ENCODE measurements at regions of chr9 and their contacts with region 1.

Region 1: DNA sequence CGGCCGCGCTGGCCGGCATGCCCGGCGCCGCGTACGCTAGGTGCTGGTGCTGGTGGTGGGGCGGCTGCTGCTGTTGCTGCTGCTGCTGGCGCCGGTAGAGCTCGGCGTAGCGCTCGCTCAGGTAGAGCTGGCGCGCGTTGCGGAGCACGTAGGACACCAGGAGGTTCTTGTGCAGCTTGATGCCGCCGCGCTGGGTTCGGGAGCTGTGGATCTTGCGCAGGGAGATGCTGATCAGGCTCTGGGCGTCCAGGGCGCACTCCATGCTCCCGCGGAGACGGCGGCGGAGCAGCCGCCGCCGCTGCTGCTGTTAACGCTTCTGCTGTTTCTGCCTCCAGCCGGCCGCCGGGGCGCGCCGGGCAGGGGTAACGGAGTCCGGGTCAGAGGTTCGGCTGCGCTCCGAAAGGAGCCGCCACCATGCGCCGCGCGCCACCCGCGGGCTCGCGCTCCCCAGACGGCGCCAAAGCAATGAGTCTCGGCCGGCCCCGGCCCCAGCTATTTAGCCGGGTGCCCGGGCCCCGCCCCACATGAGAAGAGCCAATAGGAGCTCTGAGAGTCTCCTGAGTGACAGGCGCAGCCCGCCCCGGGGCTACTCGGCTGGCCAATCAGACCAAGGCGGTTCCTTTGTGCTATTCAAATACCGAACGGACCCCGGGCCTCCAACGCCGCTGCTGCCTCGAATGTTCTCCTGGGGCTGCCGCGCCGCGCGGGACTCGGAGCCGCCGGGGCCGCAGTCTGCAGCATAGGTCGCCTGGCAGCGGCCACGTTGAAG is at the start of gene IER5L:
- DNase-seq: peak; percentile 97
- H3K4me3 ChIP-seq: peak within 1 kb of the TSS; percentile 81
- H3K4me3 Mint-ChIP-seq: peak within 1 kb of the TSS; percentile 89
- H3K27ac Mint-ChIP-seq: peak within 1 kb of the TSS; percentile 30
- H3K4me1 ChIP-seq: peaks cover 49% of the 10 kb centered on the region
- H3K4me1 Mint-ChIP-seq: peaks cover 27% of the 10 kb centered on the region
- H3K27me3 ChIP-seq: no peaks in the 10 kb centered on the region
- H3K27me3 Mint-ChIP-seq: no peaks in the 10 kb centered on the region
- CTCF ChIP-seq: no peak
- total RNA-seq, gene IER5L: 3.9 and 4.1 TPM in 2 replicates

Region 2: DNA sequence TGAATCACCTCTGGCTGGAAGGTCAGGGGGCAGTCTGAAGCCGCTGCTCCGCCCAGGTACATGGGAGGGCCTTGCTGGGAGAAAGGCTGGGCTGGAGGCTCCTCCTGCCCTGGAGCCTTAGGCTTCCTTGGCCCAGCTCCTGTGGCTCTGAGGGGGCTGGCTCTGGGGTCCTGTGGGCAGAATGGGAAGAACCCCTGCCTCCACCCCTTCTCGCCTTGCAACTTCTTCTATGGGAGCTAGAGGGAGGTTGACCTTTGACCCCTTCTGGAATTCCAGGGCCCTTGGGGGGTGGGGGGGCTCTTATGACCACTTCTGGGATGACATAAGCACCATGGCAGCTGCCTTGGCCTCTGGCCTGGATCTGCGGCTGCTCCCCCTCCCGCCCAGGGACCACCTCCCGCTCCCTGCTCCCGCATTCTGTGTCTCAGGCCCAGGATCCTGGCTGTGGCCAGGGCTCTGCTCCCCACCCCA is 32.1 kb before region 1 on chr9:
- CTCF ChIA-PET with region 1: interaction called, 23 read pairs
- POLR2A ChIA-PET with region 1: interaction called, 11 read pairs
- intact Hi-C with region 1: no loop called
- DNase-seq: peak; percentile 55 to 76
- H3K4me3 ChIP-seq: no peak overlapping the region
- H3K4me3 Mint-ChIP-seq: peak overlapping the region; percentile 29
- H3K27ac Mint-ChIP-seq: peak overlapping the region; percentile 93
- H3K4me1 ChIP-seq: peaks cover 55% of the 10 kb centered on the region
- H3K4me1 Mint-ChIP-seq: peaks cover 29% of the 10 kb centered on the region
- H3K27me3 ChIP-seq: no peaks in the 10 kb centered on the region
- H3K27me3 Mint-ChIP-seq: no peaks in the 10 kb centered on the region
- CTCF ChIP-seq: no peak

Region 3: DNA sequence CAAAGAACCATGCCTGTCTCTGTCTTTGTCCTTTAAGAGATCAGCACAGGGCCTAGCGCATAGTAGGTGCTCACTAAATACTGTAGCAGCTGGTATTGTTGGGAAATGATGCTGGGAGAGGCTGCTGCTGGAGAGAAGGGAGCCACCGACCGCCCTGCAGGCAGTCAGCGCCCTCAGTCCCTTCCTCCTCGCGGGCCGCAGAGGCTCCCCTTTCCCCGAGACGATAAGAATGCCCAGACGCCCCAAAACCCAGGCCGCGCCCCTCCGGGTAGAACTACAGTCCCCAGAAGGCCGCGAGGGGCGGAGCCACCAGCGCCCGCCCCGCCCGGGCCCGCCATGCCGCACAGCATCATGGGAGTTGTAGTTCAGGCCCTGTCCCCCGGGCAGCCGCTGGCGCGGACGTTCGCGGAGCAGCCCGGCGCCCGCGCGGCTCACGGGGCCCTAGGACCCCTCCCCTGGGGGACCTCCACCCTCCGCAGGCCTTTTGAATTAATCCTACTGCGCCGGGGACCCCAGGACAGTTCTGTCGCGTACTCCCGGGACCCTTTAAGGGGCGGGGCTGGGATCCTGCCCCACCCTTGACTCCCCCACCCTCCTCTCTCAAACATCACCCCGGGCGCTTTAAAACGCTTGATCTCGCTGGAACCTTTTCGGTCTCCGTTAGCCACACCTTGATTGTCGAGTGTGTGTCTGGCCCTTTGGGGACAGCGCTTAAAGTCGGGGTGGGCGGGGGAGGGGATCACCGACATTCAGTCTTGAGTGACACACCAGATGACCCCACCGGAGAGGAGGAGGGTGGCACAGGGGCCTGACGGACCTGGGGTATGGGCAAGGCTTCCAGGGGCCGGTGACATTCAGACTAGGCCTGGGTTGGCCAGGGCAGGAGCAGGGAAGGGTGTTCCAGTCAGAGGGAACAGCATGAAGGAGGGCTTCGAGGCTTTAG is 24.9 kb after region 1 on chr9:
- CTCF ChIA-PET with region 1: no interaction called
- POLR2A ChIA-PET with region 1: interaction called, 3 read pairs
- intact Hi-C with region 1: loop called (anchors 2 kb)
- DNase-seq: peak; percentile 82 to 92
- H3K4me3 ChIP-seq: peak overlapping the region; percentile 66
- H3K4me3 Mint-ChIP-seq: peak overlapping the region; percentile 79
- H3K27ac Mint-ChIP-seq: no peak overlapping the region
- H3K4me1 ChIP-seq: no peaks in the 10 kb centered on the region
- H3K4me1 Mint-ChIP-seq: no peaks in the 10 kb centered on the region
- H3K27me3 ChIP-seq: no peaks in the 10 kb centered on the region
- H3K27me3 Mint-ChIP-seq: no peaks in the 10 kb centered on the region
- CTCF ChIP-seq: no peak

Region 4: DNA sequence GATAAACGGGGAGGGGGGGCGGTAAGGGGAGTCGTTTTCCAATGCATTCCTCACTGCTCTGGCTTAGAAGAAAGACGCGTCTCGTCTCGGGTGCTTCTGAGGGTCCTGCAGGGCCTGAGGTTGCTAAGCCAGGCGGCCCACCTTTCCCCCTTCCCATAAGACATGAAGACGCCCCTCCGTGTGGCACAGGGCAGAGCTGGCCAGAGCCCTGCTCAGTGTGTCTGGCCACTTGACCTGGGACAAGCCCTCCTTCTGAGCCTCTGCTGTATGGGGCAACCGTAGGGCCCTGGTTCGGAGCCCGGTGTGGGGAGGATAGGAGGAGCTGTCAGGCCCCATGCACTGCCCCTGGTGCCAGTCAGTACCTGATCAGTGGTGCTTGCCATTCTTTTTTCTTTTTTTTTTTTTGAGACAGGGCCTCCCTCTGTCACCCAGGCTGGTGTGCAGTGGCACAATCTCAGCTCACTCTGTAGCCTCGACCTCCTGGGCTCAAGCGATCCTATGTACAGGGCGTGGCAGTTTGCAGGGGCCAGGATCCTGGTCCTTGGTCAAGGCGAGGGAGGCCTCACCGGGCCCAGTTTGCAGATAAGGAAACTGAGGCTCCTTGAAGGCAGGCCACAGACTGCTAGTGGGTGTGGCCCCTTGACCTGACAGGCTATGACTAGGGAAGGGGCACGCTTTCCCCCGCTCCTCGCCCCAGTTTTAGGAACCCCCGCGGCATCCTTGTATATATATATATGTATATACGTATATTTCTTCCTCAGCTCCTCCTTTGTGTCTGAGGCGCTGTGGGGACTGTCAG is 172.4 kb after region 1 on chr9:
- CTCF ChIA-PET with region 1: no interaction called
- POLR2A ChIA-PET with region 1: no interaction called
- intact Hi-C with region 1: no loop called
- DNase-seq: no peak
- H3K4me3 ChIP-seq: no peak overlapping the region
- H3K4me3 Mint-ChIP-seq: no peak overlapping the region
- H3K27ac Mint-ChIP-seq: no peak overlapping the region
- H3K4me1 ChIP-seq: no peaks in the 10 kb centered on the region
- H3K4me1 Mint-ChIP-seq: no peaks in the 10 kb centered on the region
- H3K27me3 ChIP-seq: no peaks in the 10 kb centered on the region
- H3K27me3 Mint-ChIP-seq: no peaks in the 10 kb centered on the region
- CTCF ChIP-seq: no peak

Region 5: DNA sequence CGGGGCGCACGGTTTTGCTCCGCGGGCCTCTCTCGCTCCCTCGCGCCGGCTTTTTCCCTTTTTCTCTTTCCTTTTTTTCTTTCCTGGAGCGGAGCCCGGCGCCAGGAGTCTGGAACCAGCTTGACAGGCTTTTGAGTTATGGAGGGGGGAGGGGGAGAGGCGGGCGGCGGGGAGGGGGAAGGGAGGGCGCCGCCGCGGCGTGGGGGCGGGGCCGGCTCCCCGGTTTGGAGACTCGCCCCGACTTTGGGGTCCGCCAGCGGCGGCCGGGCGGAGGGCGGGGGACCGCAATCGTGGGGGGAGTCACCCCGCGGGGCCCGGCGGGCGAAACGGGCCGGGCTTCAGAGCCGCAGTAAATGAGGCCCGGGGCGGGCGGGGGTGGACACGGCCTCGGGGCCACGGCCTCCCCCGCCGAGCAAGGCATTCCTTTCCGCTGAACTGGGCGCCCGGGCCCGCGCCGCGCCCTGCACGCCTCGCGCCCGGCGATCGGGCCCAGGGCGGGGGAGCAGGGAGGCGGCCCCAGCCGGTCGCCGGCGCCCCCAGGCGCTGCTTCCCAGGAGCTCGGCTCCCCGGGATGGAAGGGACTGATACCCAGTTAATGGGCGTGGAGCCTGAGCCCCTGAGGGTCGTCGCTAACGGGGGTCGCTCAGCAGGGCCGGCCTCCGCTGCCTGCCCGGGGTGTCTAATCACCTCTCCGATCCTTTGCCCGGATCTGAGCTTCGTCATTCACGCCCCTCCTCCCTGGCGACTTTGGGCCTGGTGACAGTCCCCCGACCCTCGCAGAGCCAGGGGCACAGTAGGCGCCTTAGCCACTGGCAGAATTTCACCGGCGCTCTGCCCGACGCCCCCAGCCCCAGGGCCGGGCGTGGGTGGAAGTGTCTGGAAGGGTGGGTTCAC is 304.8 kb after region 1 on chr9:
- CTCF ChIA-PET with region 1: no interaction called
- POLR2A ChIA-PET with region 1: interaction called, 12 read pairs
- intact Hi-C with region 1: loop called (anchors 5 kb)
- DNase-seq: peak; percentile 84 to 88
- H3K4me3 ChIP-seq: peak overlapping the region; percentile 36
- H3K4me3 Mint-ChIP-seq: peak overlapping the region; percentile 82
- H3K27ac Mint-ChIP-seq: peak overlapping the region; percentile 92
- H3K4me1 ChIP-seq: peaks cover 81% of the 10 kb centered on the region
- H3K4me1 Mint-ChIP-seq: peaks cover 68% of the 10 kb centered on the region
- H3K27me3 ChIP-seq: no peaks in the 10 kb centered on the region
- H3K27me3 Mint-ChIP-seq: no peaks in the 10 kb centered on the region
- CTCF ChIP-seq: no peak

Region 6: DNA sequence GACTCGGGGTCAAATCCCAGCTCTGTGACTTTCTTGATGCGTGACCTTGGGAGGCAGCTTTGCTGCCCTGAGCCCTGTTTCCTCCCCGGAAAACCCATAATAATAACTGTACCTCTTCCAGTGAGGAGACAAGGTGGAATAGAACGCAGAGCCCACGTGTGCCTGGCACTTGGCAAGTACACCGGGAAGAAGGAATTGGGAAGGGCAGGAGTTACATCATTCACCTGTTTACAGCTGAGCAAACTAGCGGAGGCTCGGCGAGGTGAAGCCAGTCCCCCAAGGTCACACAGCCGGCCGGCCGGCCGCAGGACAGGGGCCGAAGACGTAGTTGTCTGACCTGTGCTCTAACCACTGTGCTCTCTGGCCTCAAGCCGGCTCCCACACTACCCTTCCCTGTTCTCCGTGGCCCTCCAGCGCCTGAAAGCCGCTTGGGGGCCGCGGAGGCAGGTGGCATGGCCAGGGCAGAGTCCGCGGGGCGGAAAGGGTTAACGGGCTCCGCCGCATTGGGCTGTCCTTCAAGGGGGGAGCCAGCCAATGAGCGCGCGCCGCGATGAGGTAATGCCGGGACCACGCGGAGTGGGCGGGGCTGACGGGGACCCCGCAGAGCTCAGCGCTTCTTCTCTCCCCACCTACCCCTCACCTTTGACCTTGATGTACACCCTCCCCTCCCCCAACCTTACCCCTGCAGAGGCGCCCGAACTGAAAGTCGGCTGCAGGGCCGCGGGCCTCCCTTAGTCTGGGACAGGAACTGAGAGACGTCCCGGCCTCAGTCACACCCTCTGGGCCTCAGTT is 317.8 kb after region 1 on chr9:
- CTCF ChIA-PET with region 1: interaction called, 6 read pairs
- POLR2A ChIA-PET with region 1: interaction called, 16 read pairs
- intact Hi-C with region 1: no loop called
- DNase-seq: peak; percentile 96 to 98
- H3K4me3 ChIP-seq: peak overlapping the region; percentile 50
- H3K4me3 Mint-ChIP-seq: peak overlapping the region; percentile 75
- H3K27ac Mint-ChIP-seq: peak overlapping the region; percentile 79
- H3K4me1 ChIP-seq: peaks cover 53% of the 10 kb centered on the region
- H3K4me1 Mint-ChIP-seq: peaks cover 49% of the 10 kb centered on the region
- H3K27me3 ChIP-seq: no peaks in the 10 kb centered on the region
- H3K27me3 Mint-ChIP-seq: no peaks in the 10 kb centered on the region
- CTCF ChIP-seq: no peak

Region 7: DNA sequence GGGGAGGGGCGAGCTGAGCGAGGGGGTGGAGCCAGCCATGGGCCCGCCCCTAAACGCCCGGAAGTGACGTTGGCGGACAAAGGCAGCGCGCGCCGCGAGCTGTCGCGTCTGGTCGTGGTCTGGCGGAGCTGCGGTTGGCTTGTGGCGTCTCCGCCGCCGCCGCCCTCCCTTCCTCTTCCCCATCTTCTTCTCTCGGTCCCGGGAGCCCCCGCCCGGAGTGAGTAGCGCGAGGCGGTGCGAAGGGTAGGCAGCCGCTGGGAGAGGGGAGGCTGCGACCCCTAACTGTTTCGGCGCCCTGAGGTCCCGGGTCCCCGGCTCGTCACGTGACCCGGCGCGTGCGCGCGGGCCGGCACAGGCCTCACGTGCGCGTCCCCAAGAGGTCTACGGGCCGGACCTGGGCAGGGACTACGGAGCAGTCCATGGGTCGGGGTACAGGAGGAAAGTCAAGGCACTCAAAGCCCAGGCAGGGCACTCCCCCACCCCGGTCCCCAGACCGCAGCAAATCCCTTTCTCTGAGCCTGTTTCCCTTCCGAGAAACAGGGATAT is 448.2 kb after region 1 on chr9 and contains the start of gene NTMT1:
- CTCF ChIA-PET with region 1: interaction called, 6 read pairs
- POLR2A ChIA-PET with region 1: interaction called, 17 read pairs
- intact Hi-C with region 1: no loop called
- DNase-seq: peak; percentile 81 to 89
- H3K4me3 ChIP-seq: peak within 1 kb of the TSS; percentile 56
- H3K4me3 Mint-ChIP-seq: peak within 1 kb of the TSS; percentile 90
- H3K27ac Mint-ChIP-seq: peak within 1 kb of the TSS; percentile 81
- H3K4me1 ChIP-seq: peaks cover 11% of the 10 kb centered on the region
- H3K4me1 Mint-ChIP-seq: peaks cover 2% of the 10 kb centered on the region
- H3K27me3 ChIP-seq: no peaks in the 10 kb centered on the region
- H3K27me3 Mint-ChIP-seq: no peaks in the 10 kb centered on the region
- CTCF ChIP-seq: no peak
- total RNA-seq, gene NTMT1: 44.1 and 51.6 TPM in 2 replicates